Calu3 (cell line): ENCODE measurements at regions of chr4 and their contacts with region 1.

Region 1: DNA sequence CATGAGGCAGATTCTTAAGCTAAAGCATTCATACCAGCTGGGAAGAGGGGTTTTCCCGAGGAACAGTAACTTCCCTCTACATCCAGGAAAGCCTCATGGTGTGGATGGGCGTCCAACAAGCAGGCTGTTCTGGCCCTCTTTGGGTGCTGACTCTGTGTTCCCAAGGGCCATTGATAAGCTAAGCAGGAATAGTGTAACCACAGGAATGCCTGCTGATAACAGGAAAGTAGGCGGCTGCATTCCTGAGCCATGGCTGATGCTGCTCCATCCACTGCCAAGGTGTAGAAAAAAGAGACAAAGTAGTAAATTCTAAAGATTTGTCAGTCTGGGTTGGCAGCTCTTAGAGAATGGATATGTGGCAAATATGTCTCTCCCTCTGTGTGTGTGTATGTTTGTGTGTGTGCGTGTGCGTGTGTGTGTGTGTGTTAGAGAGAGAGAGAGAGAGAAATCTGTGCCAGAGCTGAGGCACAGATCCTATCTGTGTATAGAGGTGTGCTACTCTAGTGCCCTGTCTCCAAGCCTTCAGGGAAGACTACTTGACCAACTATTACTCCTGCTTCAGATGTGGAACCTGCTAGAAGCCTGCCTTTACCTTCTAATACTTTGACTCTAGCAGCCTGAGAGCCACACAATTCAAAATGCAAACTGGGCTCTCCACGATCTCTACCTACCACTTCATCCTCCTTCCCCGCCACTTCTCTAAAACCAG is 353.1 kb upstream of the NR3C2 start:
- DNase-seq: peak; percentile 66
- H3K4me3 Mint-ChIP-seq: peak overlapping the region; percentile 3
- H3K27ac Mint-ChIP-seq: peak overlapping the region; percentile 45
- H3K4me1 Mint-ChIP-seq: peaks cover 45% of the 10 kb centered on the region
- H3K27me3 Mint-ChIP-seq: no peaks in the 10 kb centered on the region
- CTCF ChIP-seq: no peak

Region 2: DNA sequence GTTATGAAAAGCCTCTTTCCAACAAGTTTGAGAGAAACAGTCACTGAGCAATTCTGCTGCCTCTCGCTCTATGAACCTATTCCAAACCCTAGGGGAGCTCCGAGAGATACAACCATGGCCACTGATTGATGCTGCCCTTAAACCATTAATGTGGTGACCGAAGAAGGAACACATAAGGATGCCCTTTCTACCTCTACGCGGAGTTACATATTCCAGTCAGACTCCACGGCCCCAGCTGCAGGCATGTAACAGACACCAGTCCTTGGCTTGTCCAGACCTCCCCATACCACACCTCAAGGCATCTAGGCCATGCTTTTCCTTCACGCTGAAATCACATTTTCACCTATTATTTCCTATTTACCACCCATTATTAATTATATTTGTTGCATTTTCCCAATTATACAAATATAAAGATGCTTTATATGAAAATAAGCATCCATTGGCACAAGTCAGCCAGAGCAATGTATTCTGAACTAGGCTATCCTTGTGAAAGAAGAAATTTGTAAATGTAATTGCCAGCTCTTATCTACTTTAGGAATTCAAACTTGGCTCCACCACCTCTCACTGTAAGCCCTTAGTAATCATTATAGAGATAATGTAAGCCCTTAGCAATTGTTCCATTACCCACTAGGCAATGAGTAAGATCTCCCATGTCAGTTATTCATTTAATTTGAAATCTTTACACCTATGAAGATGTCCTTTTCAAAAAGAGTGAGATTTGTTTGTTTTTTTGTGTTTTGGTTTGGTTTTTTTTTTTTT is 691.5 kb before region 1 on chr4:
- CTCF ChIA-PET with region 1: no interaction called
- intact Hi-C with region 1: no loop called
- DNase-seq: no peak
- H3K4me3 Mint-ChIP-seq: no peak overlapping the region
- H3K27ac Mint-ChIP-seq: no peak overlapping the region
- H3K4me1 Mint-ChIP-seq: no peaks in the 10 kb centered on the region
- H3K27me3 Mint-ChIP-seq: no peaks in the 10 kb centered on the region
- CTCF ChIP-seq: no peak

Region 3: DNA sequence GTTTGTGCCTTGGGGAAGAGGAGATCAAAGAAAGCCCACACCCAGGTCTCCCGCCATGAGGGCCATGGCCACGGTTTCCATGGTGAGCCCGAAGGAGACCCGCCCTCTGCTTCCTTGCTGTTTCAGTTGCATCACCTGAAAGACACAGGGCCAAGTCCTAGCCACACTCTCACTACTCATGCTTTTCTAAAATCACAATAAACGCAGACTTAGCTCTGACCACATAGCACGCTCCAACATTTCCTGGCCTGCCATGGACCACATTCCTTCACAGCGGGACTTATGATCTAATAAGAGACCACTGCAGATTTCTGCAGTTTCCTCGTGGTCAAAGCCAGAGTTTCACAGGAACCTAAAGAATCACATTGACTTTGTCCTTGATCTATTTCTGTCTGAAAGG is 72.9 kb after region 1 on chr4:
- CTCF ChIA-PET with region 1: no interaction called
- intact Hi-C with region 1: no loop called
- DNase-seq: no peak
- H3K4me3 Mint-ChIP-seq: no peak overlapping the region
- H3K27ac Mint-ChIP-seq: no peak overlapping the region
- H3K4me1 Mint-ChIP-seq: peaks cover 1% of the 10 kb centered on the region
- H3K27me3 Mint-ChIP-seq: no peaks in the 10 kb centered on the region
- CTCF ChIP-seq: no peak

Region 4: DNA sequence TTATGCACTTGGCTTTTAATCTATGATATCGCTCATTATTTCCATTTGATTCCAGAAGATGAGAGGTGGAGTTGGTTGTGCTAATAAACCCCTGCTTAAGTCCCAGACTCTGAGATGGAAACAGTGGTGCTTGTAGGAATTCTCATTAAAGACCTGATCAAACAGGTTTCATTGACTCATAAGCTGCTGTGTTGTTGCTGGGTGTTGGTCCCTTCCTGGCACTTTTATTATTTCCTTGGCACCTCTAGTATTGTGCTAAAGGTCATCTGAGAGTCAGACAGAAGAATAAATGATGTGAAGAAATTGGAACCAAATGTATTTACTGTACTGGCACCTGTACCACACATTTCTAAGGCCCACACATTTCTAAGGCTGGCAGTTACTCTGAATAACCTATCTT is 191.6 kb after region 1 on chr4:
- CTCF ChIA-PET with region 1: no interaction called
- intact Hi-C with region 1: loop called (anchors 5 kb)
- DNase-seq: peak; percentile 31
- H3K4me3 Mint-ChIP-seq: no peak overlapping the region
- H3K27ac Mint-ChIP-seq: peak overlapping the region; percentile 92
- H3K4me1 Mint-ChIP-seq: peaks cover 16% of the 10 kb centered on the region
- H3K27me3 Mint-ChIP-seq: no peaks in the 10 kb centered on the region
- CTCF ChIP-seq: no peak